ENCODE measurements at regions of chr6 and their contacts with region 1.

Region 1: DNA sequence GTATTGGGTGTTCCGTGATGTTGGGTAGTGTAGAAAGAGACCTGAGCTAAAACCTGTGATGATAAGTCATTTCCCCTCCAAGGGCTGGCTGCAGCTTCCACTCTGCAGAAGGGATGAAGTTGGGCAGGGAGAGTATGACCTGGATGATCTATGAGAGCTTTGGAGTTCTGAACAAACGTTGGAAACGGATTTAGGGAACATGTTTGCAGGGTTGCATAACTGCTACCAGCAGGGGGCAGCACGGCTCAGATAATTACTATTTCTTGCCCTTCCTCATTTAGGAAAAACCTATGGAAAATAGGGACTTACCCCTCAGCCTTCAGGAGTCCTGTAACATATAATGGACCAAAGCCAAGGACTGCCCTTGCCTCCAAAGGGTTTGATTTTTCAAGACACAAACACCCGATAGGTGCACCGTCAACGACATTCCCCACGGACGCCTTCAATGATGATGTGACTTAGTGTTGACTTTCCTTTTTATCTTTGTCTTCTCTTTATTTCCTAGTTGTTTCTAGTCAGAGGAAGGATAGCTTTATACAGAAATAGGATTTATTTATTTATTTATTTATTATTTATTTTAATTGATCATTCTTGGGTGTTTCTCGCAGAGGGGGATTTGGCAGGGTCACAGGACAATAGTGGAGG is 164.9 kb upstream of the SASH1 start:
- DNase-seq: peak; percentile 5
- H3K4me3 ChIP-seq: no peak overlapping the region
- CTCF ChIP-seq: peak; percentile 61

Region 2: DNA sequence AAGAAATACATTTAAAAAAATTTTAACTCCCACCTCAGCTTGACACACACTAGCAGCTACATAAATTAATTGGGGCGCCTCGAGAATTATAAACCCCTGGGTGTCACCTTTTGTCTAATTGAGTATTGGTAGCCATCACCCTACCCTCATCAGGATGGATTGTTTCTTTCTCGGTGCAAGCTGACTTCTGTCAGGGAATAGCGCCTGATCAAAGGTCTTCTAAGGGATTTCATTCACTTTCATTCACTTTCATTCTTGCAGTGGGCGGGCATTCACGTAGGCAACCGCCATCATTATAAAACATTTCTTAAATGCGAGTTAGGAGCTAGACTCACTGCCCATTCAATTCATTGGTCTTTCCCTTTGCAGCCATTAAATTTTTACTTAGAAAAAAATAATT is 74.3 kb before region 1 on chr6:
- CTCF ChIA-PET with region 1: no interaction called
- POLR2A ChIA-PET with region 1: no interaction called
- DNase-seq: no peak
- H3K4me3 ChIP-seq: no peak overlapping the region
- CTCF ChIP-seq: no peak

Region 3: DNA sequence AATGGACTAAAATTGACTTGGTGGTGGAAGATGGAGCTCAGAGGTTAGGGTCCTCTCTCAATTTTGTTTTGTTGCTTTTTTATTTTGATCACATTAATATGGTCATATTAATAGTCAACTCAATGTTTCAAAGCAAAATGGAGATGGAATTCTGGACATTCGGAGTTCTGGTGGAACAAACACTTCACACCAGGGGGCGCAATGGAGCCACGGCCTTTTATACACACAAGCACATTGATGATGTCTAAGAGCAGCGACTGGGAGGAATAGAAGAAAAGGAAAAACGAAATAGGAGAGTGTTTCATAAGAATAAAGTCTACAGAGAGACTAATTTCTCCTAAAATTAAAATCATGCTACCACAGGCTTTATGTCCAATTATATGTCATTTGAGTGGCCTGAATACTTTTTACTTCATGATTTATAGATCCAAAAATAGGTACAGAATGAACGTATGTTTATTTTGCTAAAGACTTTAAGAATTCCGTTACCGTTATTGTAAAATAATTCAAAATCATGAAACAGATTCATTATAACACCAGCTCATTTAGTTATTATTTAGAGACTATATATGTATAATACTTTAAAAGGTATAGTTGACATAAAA is 32.7 kb before region 1 on chr6:
- CTCF ChIA-PET with region 1: interaction called, 15 read pairs
- POLR2A ChIA-PET with region 1: no interaction called
- DNase-seq: peak; percentile 4
- H3K4me3 ChIP-seq: no peak overlapping the region
- CTCF ChIP-seq: peak; percentile 72

Region 4: DNA sequence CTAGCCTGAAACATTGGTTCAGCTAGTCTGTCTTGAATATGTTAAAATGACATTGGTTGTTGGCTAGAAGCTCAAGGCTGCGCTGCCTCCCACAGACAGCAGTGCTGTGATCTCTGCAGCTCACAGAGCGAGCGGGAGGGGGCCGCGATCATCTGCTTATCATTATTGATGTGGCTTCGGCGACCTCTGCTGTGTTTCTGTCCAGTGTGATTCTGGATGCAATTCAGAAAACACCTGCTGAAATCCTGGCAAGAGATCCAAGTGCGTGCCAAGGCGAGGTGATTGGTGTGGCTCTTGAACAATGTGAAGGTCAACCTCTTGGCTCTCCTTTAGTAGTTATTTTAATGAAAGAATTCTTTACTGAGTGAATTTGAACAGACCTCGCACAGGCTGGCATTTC is 22.6 kb after region 1 on chr6:
- CTCF ChIA-PET with region 1: interaction called, 54 read pairs
- POLR2A ChIA-PET with region 1: no interaction called
- DNase-seq: no peak
- H3K4me3 ChIP-seq: no peak overlapping the region
- CTCF ChIP-seq: no peak

Region 5: GRCh38 chr6:148250975-148251685 is 73.4 kb after region 1 on chr6:
- CTCF ChIA-PET with region 1: interaction called, 188 read pairs
- POLR2A ChIA-PET with region 1: no interaction called
- DNase-seq: peak; percentile 47
- H3K4me3 ChIP-seq: no peak overlapping the region
- CTCF ChIP-seq: peak; percentile 31

Region 6: DNA sequence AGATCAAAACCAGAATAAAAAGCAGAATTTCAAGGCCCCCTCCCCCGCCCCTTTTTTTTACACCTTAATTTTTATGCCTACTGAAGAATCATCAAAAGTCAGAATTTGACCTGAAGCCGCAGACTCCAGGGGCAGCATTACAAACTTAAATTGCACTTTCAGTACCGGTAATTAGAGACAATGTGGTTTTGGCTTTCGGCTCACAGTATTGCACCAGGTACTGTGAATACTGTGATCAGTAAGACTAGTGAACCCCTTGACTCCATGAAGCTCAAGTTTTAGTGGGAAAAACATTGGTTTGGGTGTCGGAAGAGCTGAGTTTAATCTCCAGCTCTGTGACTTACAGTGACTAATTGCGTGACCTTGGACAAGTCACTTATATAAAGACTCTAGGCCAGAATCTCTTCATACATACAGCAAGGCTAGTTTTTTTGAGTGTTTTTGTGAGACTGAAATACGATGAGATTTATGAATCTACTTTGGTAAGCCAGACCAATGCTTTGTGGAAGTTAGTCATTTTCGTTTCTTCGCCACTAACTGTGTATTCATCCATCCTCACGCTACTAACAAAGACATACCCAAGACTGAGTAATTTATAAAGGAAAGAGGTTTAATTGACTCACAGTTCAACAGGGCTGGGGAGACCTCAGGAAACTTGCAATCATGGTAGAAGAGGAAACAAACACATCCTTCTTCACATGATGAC is 279.6 kb after region 1 on chr6:
- CTCF ChIA-PET with region 1: interaction called, 48 read pairs
- POLR2A ChIA-PET with region 1: no interaction called
- DNase-seq: no peak
- H3K4me3 ChIP-seq: no peak overlapping the region
- CTCF ChIP-seq: no peak

Region 7: DNA sequence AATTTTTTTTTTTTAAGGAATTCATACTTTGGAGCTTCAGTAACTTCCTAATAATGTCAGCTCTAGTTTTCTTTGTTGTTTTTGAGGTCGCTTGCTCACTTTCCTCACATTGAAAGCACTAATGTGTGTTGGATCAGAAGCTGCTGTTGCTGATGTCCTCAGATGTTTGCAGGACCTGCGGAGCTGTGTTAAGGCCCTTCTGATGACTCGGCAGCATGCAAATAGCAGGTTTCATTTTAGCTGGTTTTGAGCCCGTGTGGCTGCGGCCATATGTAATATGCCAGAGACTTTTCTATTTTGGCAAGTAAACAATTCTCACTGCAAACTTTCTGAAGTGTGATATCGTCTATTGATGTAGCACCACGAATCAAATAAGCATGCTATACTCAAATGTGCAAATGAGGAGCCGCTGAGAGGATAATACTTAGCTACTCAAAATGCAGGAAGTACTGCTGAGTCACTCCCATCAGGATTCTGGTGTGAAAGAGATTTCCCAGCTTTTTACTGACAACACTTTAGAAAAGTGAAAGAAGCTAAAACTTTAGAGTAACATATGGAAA is 352.8 kb after region 1 on chr6:
- CTCF ChIA-PET with region 1: interaction called, 22 read pairs
- POLR2A ChIA-PET with region 1: no interaction called
- DNase-seq: peak; percentile 94
- H3K4me3 ChIP-seq: peak overlapping the region; percentile 42
- CTCF ChIP-seq: no peak